ENCODE measurements at regions of chr5 and their contacts with region 1.

Region 1: DNA sequence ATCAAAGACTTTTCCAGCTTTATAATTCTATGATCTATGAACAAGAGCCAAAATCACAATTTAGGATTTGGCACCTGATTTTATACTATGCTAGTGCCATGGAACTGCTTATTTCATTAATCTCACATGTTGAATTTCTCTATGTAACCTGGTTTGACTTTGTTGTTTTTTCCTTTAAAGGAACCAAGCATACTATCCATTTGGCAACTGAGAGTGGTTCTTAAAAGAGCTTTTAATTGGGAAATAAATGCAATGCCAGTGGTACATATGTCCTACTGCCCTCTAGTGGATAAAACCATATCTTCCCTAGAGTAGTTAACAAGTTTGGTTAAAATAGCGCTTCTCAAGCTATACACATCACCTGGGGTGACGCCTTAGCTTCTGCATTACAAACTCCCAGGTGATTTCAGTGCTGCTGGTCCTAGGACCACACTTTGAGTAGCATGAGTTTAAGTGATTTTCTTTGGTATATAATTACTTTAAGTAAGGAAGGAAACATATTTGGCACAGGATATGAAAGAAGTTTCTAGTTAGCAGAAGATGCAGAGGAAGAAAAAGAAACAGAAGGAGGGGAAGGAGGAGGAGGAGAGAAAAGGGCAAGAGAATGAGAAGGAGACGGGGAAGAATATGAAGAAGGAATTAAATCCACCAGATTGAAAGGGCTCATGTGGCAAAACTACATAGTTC is 56.8 kb downstream of the FGF10 start:
- DNase-seq: no peak
- ATAC-seq: peak; percentile 78
- H3K4me3 ChIP-seq: no peak overlapping the region
- H3K27ac ChIP-seq: no peak overlapping the region
- H3K4me1 ChIP-seq: no peaks in the 10 kb centered on the region
- H3K27me3 ChIP-seq: no peaks in the 10 kb centered on the region

Region 2: DNA sequence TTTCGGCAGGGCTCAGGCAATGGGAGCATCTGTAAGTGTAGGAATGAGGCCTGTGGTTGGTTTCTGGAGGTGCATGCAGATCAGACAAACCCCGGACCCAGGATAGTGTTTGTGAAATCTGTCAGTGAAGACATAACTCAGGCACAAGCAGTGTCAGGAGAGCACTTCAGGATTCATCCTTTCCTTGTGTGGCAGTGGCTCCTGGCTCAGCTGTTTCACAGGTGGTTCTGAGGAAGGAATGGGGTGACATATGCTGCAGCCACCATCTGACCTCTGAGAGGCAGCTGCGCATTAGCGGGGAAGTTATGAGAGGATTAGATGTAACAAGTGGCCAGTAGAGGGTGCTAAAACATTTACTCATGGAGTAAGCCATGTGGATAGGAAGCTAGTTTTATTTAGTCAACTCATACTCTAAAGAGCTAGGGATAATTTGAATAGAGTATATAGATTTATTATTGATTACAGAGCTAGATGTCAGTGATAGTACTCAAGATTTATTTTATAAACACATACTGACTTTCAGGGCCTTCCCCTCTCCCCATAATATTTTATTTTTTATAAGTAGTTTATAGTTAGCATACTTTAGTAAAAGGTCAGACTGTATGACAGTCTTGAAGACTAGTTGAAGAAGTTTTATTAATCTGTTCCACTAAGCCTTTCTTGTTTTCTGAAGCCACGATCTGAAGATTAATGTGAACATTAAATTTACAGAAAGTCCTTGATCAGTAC is 701.1 kb before region 1 on chr5:
- intact Hi-C with region 1: loop called in 1 of 2 experiments (anchors 10 kb)
- DNase-seq: no peak
- ATAC-seq: peak; percentile 86
- H3K4me3 ChIP-seq: no peak overlapping the region
- H3K27ac ChIP-seq: no peak overlapping the region
- H3K4me1 ChIP-seq: peaks cover 4 to 6% of the 10 kb centered on the region in 2 donors
- H3K27me3 ChIP-seq: no peaks in the 10 kb centered on the region

Region 3: GRCh38 chr5:43729846-43730478 is 602.5 kb before region 1 on chr5:
- intact Hi-C with region 1: loop called (anchors 10 kb)
- DNase-seq: no peak
- ATAC-seq: no peak
- H3K4me3 ChIP-seq: no peak overlapping the region
- H3K27ac ChIP-seq: no peak overlapping the region
- H3K4me1 ChIP-seq: peaks cover 0 to 2% of the 10 kb centered on the region in 2 donors
- H3K27me3 ChIP-seq: no peaks in the 10 kb centered on the region

Region 4: GRCh38 chr5:44266882-44267576 is 65.4 kb before region 1 on chr5:
- intact Hi-C with region 1: no loop called
- DNase-seq: peak in 1 of 2 donors; percentile 36
- ATAC-seq: no peak
- H3K4me3 ChIP-seq: no peak overlapping the region
- H3K27ac ChIP-seq: no peak overlapping the region
- H3K4me1 ChIP-seq: no peaks in the 10 kb centered on the region
- H3K27me3 ChIP-seq: no peaks in the 10 kb centered on the region

Region 5: GRCh38 chr5:44565872-44566271 is 233.4 kb after region 1 on chr5:
- intact Hi-C with region 1: no loop called
- DNase-seq: no peak
- ATAC-seq: no peak
- H3K4me3 ChIP-seq: no peak overlapping the region
- H3K27ac ChIP-seq: no peak overlapping the region
- H3K4me1 ChIP-seq: no peaks in the 10 kb centered on the region
- H3K27me3 ChIP-seq: no peaks in the 10 kb centered on the region

Region 6: DNA sequence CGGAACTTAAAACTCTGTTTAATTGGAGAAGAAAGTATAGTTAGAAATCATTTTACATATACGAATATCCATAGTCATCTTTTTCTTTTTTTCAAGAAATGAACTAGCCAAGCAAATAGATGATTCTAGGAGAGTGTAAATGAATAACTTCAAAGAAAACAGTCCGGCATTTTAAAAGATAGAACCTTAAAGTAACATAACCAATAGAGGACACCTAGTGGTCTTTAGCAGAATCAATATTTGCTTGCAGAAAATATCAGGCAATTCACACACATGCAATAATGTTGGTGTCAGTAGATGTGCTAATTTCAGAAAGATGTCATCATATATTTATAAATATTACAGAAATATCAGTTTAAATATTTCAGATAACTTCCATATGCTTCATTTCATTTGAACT is 1306.6 kb after region 1 on chr5:
- intact Hi-C with region 1: no loop called
- DNase-seq: no peak
- ATAC-seq: no peak
- H3K4me3 ChIP-seq: no peak overlapping the region
- H3K27ac ChIP-seq: no peak overlapping the region
- H3K4me1 ChIP-seq: no peaks in the 10 kb centered on the region
- H3K27me3 ChIP-seq: no peaks in the 10 kb centered on the region